Mammary epithelial cell (primary cell): ENCODE measurements at regions of chr3 and their contacts with region 1.

Region 1: DNA sequence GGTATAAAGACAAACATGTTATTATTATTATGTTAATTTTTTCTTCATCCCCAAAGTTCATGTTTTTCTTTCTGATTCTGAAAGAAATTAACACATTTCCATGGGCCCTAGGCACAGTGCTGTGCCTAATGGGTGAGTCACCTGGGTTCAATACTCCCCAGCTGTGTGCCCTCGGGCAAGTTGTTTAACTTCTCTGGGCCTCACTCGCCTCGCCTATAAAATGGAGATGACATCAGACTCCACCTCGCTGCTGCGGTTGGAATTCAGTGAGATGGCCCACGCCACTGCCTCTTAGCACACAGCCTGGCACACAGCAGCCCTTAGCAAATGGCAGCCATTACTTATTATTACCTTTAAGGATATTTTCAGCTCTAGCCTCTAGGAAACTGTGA is 22.6 kb downstream of the DNASE1L3 start:
- DNase-seq: peak; percentile 82
- H3K4me3 ChIP-seq: no peak overlapping the region
- H3K27ac ChIP-seq: no peak overlapping the region
- H3K4me1 ChIP-seq: peaks cover 9% of the 10 kb centered on the region
- H3K27me3 ChIP-seq: no peaks in the 10 kb centered on the region
- CTCF ChIP-seq: no peak

Region 2: DNA sequence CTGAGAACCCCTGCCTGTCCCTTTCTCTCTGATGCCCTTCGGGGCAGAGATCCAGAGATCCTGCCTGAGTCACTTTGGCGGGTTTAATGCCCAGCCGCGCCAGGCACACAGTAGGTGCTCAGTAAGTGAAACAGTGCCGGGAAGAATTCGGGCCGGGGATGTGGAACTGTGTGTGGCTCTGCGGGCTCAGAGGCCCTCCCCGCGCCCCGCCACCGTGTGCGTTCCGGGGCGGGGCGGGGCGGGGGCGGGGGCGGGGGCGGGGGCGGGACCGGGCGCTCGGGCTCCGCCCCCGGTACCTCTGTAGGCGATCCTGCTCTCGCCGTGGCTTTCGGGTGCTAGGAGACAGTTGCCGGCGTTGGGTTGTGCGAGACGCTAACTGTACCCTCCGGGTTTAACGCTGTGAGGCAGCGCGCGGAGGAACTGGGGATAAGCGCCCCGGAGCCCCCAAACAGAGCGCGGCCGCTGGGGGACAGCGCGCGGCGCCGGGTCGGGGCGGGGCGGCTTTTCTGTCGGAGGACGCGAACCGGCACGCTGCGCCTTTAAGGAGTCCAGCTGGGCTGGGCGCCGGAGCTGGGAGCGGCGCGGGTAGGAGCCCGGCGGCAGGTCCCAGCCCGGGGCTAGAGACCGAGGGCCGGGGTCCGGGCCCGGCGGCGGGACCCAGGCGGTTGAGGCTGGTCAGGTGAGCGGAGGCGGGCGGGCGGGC is 49.2 kb after region 1 on chr3 and contains the start of gene ABHD6:
- CTCF ChIA-PET with region 1: interaction called, 19 read pairs
- dilution Hi-C with region 1: no loop called
- in situ Hi-C with region 1: no loop called
- intact Hi-C with region 1: loop called (anchors 1 kb)
- DNase-seq: peak; percentile 73
- H3K4me3 ChIP-seq: peak within 1 kb of the TSS; percentile 82 to 87 (median 86)
- H3K27ac ChIP-seq: peak within 1 kb of the TSS; percentile 45
- H3K4me1 ChIP-seq: peaks cover 25% of the 10 kb centered on the region
- H3K27me3 ChIP-seq: no peaks in the 10 kb centered on the region
- CTCF ChIP-seq: peak in 1 of 2 donors; percentile 43
- total RNA-seq, gene ABHD6: 9.4 to 21.3 TPM

Region 3: DNA sequence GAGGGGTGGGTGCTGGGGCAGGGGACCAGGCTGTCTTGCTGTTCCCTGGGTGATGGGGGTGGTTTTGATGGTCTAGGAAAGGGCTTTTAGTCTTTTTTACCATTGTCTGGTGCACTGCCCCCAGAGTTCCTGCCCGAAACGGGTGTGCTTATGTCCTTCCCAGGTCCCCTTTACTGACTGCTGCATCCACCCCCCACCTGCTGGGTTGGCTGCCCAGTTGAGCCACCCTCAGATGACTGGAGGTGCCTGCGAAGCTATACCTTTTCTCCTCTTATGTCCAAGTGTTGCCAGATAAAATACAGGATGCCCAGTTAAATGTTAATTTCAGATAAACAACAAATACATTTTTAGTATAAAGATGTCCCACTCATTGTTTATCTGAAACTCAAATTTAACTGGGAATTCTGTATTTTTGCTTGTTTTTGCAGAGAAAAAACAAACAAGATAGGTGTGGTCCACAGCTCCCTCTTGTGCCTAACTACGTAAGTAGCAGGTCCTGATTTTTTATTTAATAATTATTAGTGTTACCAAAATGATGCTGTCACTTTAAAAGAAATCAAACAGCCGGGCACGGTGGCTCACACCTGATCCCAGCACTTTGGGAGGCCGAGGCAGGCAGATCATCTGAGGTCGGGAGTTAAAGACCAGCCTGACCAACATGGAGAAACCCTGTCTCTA is 111.8 kb after region 1 on chr3:
- CTCF ChIA-PET with region 1: interaction called, 11 read pairs
- dilution Hi-C with region 1: loop called (anchors 5 kb)
- in situ Hi-C with region 1: loop called (anchors 5 to 10 kb)
- intact Hi-C with region 1: loop called (anchors 1 kb)
- DNase-seq: peak; percentile 14
- H3K4me3 ChIP-seq: no peak overlapping the region
- H3K27ac ChIP-seq: no peak overlapping the region
- H3K4me1 ChIP-seq: no peaks in the 10 kb centered on the region
- H3K27me3 ChIP-seq: no peaks in the 10 kb centered on the region
- CTCF ChIP-seq: peak; percentile 52 to 63

Region 4: GRCh38 chr3:58414538-58415197 is 226.5 kb after region 1 on chr3:
- CTCF ChIA-PET with region 1: no interaction called
- dilution Hi-C with region 1: loop called (anchors 25 kb)
- in situ Hi-C with region 1: loop called in 1 of 2 experiments (anchors 25 kb)
- intact Hi-C with region 1: loop called (anchors 2 kb)
- DNase-seq: peak; percentile 52
- H3K4me3 ChIP-seq: no peak overlapping the region
- H3K27ac ChIP-seq: no peak overlapping the region
- H3K4me1 ChIP-seq: no peaks in the 10 kb centered on the region
- H3K27me3 ChIP-seq: no peaks in the 10 kb centered on the region
- CTCF ChIP-seq: peak; percentile 75 to 84